ENCODE measurements at regions of chr1 and their contacts with region 1.

Region 1: GRCh38 chr1:153967082-153968000 is at the start of gene CREB3L4:
- DNase-seq: peak; percentile 91
- ATAC-seq: peak; percentile 87
- H3K4me3 Mint-ChIP-seq: peak within 1 kb of the TSS; percentile 96
- H3K27ac Mint-ChIP-seq: peak within 1 kb of the TSS; percentile 96
- H3K4me1 Mint-ChIP-seq: peaks cover 38% of the 10 kb centered on the region
- H3K27me3 Mint-ChIP-seq: no peaks in the 10 kb centered on the region
- total RNA-seq, gene CREB3L4: 8.5 to 9.1 TPM

Region 2: GRCh38 chr1:153805042-153805745 is 162.1 kb before region 1 on chr1:
- CTCF ChIA-PET with region 1: no interaction called
- POLR2A ChIA-PET with region 1: interaction called, 5 read pairs
- intact Hi-C with region 1: loop called in 1 of 2 experiments (anchors 1 kb)
- DNase-seq: peak; percentile 87
- ATAC-seq: peak; percentile 98
- H3K4me3 Mint-ChIP-seq: peak overlapping the region; percentile 28
- H3K27ac Mint-ChIP-seq: peak overlapping the region; percentile 85
- H3K4me1 Mint-ChIP-seq: peaks cover 30% of the 10 kb centered on the region
- H3K27me3 Mint-ChIP-seq: no peaks in the 10 kb centered on the region

Measured in activated CD4-positive, alpha-beta T cell treated with anti-CD3 and anti-CD28 coated beads for 36 hours (primary cell).